Breast epithelium (tissue), 4 donors: ENCODE measurements at regions of chr4 and their contacts with region 1.

Region 1: DNA sequence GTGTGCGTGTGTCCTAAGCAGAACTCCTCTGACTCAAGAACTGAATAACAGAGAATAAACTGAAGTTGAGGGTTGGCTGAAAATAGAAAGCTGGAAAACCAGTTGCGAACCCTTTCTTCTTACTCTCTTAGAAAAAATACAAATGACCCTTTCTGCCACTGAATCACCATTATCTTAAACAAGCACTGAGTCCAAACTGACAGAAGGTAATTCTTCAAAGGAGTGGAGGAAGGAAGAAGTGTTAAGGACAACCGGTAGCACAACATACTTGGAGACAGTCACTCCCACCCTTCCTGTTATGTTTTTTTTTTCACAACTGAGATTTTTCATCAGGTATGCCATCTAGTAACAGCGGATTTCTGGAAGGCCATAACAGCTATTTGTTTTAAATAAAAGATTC is 38.1 kb downstream of the HELQ start:
- DNase-seq: no peak
- H3K4me3 ChIP-seq: no peak overlapping the region
- H3K27ac ChIP-seq: no peak overlapping the region
- H3K4me1 ChIP-seq: no peaks in the 10 kb centered on the region
- H3K27me3 ChIP-seq: no peaks in the 10 kb centered on the region
- CTCF ChIP-seq: no peak
- POLR2A ChIP-seq: no peak

Region 2: DNA sequence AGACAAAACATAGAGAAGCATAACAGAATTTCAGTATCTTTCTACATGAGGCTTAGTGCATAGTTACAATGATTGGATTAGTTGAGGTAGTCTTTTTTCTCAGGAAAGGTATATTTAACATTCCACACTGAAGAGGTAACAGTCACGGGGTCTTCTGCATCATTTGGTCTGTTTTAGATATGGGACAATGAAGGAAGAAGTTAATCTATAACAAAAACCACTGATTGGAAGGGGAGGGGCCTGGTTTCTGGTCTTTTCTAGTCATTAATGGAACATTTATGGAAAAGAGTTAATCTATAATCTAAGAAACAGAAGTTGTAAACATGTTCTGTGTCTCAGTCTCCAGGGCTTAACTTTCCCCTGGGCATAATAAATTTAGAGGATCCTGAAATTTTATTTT is 45.6 kb before region 1 on chr4:
- intact Hi-C with region 1: loop called (anchors 2 kb)
- DNase-seq: no peak
- H3K4me3 ChIP-seq: no peak overlapping the region
- H3K27ac ChIP-seq: no peak overlapping the region
- H3K4me1 ChIP-seq: no peaks in the 10 kb centered on the region
- H3K27me3 ChIP-seq: no peaks in the 10 kb centered on the region
- CTCF ChIP-seq: no peak
- POLR2A ChIP-seq: no peak